Transverse colon (tissue), 4 donors: ENCODE measurements at regions of chr4 and their contacts with region 1.

Region 1: GRCh38 chr4:14046642-14047041 is 419.1 kb upstream of the BOD1L1 start:
- DNase-seq: no peak
- H3K4me3 ChIP-seq: no peak overlapping the region
- H3K27ac ChIP-seq: no peak overlapping the region
- H3K4me1 ChIP-seq: no peaks in the 10 kb centered on the region
- H3K27me3 ChIP-seq: no peaks in the 10 kb centered on the region
- CTCF ChIP-seq: no peak
- EP300 ChIP-seq: no peak
- POLR2A ChIP-seq: no peak

Region 2: GRCh38 chr4:12071316-12071715 is 1975.3 kb before region 1 on chr4:
- in situ Hi-C with region 1: no loop called
- intact Hi-C with region 1: loop called (anchors 5 kb)
- DNase-seq: no peak
- H3K4me3 ChIP-seq: no peak overlapping the region
- H3K27ac ChIP-seq: no peak overlapping the region
- H3K4me1 ChIP-seq: no peaks in the 10 kb centered on the region
- H3K27me3 ChIP-seq: no peaks in the 10 kb centered on the region
- CTCF ChIP-seq: no peak
- EP300 ChIP-seq: no peak
- POLR2A ChIP-seq: no peak

Region 3: DNA sequence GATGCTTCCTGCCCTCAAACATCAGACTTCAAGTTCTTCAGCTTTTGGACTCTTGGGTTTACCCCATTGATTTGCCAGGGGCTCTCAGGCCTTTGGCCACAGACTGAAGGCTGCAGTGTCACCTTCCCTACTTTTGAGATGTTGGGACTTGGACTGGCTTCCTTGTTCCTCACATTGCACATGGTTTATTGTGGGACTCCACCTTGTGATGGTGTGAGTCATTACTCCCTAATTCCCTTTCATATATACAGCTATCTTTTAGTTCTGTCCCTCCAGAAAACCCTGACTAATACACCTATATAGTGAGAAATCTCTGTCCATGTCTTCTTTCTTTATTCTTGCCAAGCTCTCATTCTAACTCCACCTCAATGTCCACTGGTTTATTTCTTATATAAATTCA is 1881.0 kb before region 1 on chr4:
- in situ Hi-C with region 1: no loop called
- intact Hi-C with region 1: no loop called
- DNase-seq: no peak
- H3K4me3 ChIP-seq: no peak overlapping the region
- H3K27ac ChIP-seq: no peak overlapping the region
- H3K4me1 ChIP-seq: no peaks in the 10 kb centered on the region
- H3K27me3 ChIP-seq: no peaks in the 10 kb centered on the region
- CTCF ChIP-seq: no peak
- EP300 ChIP-seq: no peak
- POLR2A ChIP-seq: no peak